IMR-90 (cell line): ENCODE measurements at regions of chr7 and their contacts with region 1.

Region 1: GRCh38 chr7:1466524-1467271 is 7.4 kb upstream of the MICALL2 start:
- DNase-seq: peak; percentile 41
- ATAC-seq: peak; percentile 86
- H3K4me3 ChIP-seq: no peak overlapping the region
- H3K27ac ChIP-seq: peak overlapping the region; percentile 18
- H3K4me1 ChIP-seq: peaks cover 10% of the 10 kb centered on the region
- H3K27me3 ChIP-seq: no peaks in the 10 kb centered on the region
- CTCF ChIP-seq: no peak
- POLR2A ChIP-seq: no peak
- RAD21 ChIP-seq: no peak

Region 2: GRCh38 chr7:1452205-1452604 is 14.5 kb before region 1 on chr7:
- CTCF ChIA-PET with region 1: no interaction called
- POLR2A ChIA-PET with region 1: interaction called, 11 read pairs
- dilution Hi-C with region 1: no loop called
- in situ Hi-C with region 1: no loop called
- intact Hi-C with region 1: no loop called
- DNase-seq: no peak
- ATAC-seq: no peak
- H3K4me3 ChIP-seq: no peak overlapping the region
- H3K27ac ChIP-seq: no peak overlapping the region
- H3K4me1 ChIP-seq: peaks cover 35% of the 10 kb centered on the region
- H3K27me3 ChIP-seq: no peaks in the 10 kb centered on the region
- CTCF ChIP-seq: no peak
- POLR2A ChIP-seq: no peak
- RAD21 ChIP-seq: no peak

Region 3: GRCh38 chr7:1480670-1481069 is 14.0 kb after region 1 on chr7:
- CTCF ChIA-PET with region 1: no interaction called
- POLR2A ChIA-PET with region 1: no interaction called
- dilution Hi-C with region 1: no loop called
- in situ Hi-C with region 1: no loop called
- intact Hi-C with region 1: no loop called
- DNase-seq: no peak
- ATAC-seq: no peak
- H3K4me3 ChIP-seq: no peak overlapping the region
- H3K27ac ChIP-seq: no peak overlapping the region
- H3K4me1 ChIP-seq: no peaks in the 10 kb centered on the region
- H3K27me3 ChIP-seq: no peaks in the 10 kb centered on the region
- CTCF ChIP-seq: no peak
- POLR2A ChIP-seq: no peak
- RAD21 ChIP-seq: no peak

Region 4: DNA sequence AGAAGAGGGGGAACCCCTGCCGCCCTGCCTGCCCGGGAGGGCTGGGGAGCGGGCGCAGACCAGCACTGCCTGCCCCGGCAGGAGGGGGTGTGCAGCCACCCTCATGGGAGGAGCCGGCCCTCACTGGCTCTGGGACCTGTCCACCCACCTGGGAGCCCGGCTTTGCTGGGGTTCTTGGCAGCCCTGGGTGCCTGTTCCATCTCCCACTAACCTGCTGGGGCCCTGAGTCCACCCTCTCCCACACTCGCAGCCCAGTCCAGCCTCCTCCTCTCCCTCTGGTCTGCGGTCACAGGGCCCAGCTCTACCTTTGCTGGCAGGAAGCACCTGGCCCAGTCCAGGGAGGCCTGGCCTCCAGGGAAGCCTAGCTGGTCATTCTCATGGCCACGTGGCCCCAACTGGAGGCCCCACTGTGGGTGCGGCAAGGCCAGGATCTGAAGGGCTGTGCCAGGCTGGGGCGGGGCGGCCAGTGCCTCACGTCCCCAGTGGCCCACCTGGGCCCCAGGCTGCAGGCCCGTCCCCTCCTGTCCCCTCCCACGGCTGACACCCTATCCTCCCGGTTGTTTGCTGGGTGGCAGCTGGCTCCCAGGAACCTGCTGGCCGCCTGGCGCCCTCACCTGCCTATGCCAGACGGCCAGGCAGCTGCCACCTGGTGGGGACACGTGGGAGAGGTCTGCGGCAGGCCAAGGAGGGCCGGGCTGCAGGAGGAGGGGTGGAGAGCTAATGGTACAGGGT is 89.3 kb after region 1 on chr7 and contains the start of gene TMEM184A:
- CTCF ChIA-PET with region 1: no interaction called
- POLR2A ChIA-PET with region 1: no interaction called
- dilution Hi-C with region 1: no loop called
- in situ Hi-C with region 1: no loop called
- intact Hi-C with region 1: no loop called
- DNase-seq: no peak
- ATAC-seq: peak; percentile 6
- H3K4me3 ChIP-seq: no peak within 1 kb of the TSS
- H3K27ac ChIP-seq: peak within 1 kb of the TSS; percentile 36
- H3K4me1 ChIP-seq: peaks cover 14% of the 10 kb centered on the region
- H3K27me3 ChIP-seq: no peaks in the 10 kb centered on the region
- CTCF ChIP-seq: 0 out of 2 replicates have a peak, but pooled peaks have one; percentile 18
- POLR2A ChIP-seq: no peak
- RAD21 ChIP-seq: no peak
- total RNA-seq, gene TMEM184A: 0.28 and 0.36 TPM in 2 replicates

Region 5: DNA sequence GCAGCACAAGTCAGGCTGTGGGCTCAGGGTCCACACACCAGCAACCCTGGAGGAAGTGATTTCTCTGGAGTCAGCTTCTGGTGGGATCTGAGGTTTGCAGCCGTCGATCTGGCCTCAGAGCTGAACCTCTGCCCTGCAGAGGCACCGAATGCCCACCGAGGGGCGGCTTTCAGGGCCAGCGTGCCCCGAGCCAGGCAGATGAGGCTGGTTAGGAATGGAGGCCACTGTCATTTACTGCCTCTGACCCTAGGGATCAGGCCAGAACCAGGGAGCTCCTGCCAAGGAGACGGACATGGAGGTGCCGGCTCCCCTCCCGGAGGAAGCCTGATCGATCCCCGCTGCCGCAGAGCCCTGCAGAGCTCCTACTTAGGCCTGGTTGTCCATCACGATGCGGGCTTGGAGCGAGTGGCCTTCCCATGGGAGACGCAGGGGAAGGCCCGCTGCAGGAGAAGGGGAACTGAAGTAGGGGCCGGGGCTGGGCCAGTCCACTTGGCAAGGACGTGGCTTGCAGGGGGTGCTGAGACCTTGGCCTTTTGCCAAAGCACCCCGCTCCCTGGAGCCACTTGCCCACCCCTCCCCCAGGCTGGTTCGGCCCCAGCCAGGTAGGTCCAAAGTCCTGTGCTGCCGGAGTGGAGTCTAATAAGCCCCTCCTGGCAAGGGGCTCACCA is 183.8 kb after region 1 on chr7:
- CTCF ChIA-PET with region 1: no interaction called
- POLR2A ChIA-PET with region 1: no interaction called
- dilution Hi-C with region 1: no loop called
- in situ Hi-C with region 1: no loop called
- intact Hi-C with region 1: no loop called
- DNase-seq: no peak
- ATAC-seq: no peak
- H3K4me3 ChIP-seq: no peak overlapping the region
- H3K27ac ChIP-seq: no peak overlapping the region
- H3K4me1 ChIP-seq: no peaks in the 10 kb centered on the region
- H3K27me3 ChIP-seq: peaks cover 34% of the 10 kb centered on the region
- CTCF ChIP-seq: no peak
- POLR2A ChIP-seq: no peak
- RAD21 ChIP-seq: no peak